Activated CD4-positive, alpha-beta memory T cell treated with anti-CD3 and anti-CD28 coated beads, Interleukin-2, amount 10 ng/mL, durations not matched to agents 7 days and 5 days (primary cell): ENCODE measurements at regions of chr16 and their contacts with region 1.

Region 1: DNA sequence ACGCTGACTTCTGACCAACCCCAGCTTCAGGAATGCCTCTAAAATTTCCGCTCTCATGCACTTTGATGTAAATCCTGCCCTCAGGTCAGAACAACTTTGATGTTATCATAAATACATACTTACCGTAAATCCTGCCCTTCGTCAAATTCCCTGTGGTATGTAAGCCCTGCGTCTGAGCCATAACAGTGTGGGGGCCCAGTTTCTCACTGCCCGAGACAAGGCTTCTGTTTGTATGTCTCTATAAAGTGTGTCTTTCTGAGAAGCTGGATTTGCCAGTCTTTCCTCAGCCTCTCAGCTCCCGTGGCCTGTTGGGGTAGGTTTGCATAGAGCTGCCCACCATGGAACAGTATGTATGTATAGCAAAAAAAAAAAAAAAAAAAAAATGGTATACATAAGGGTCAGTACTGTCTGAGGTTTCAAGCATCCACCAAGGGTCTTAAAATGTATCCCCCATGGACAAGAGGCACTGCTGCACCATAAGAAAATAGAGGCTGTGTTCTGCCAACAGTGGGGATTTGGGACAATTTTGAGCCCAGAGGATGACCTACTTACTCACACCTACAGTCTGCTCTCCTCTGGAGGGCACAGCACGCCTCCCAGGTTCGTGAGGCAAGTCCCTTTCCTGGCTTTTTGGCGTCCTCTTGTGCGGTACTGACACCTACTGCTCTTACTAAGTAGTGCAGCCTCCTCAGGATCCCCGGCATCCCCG is 17.5 kb downstream of the PRMT7 start:
- DNase-seq: peak; percentile 82
- H3K4me3 Mint-ChIP-seq: no peak overlapping the region
- H3K27ac Mint-ChIP-seq: no peak overlapping the region
- H3K4me1 Mint-ChIP-seq: peaks cover 19% of the 10 kb centered on the region
- H3K27me3 Mint-ChIP-seq: no peaks in the 10 kb centered on the region

Region 2: DNA sequence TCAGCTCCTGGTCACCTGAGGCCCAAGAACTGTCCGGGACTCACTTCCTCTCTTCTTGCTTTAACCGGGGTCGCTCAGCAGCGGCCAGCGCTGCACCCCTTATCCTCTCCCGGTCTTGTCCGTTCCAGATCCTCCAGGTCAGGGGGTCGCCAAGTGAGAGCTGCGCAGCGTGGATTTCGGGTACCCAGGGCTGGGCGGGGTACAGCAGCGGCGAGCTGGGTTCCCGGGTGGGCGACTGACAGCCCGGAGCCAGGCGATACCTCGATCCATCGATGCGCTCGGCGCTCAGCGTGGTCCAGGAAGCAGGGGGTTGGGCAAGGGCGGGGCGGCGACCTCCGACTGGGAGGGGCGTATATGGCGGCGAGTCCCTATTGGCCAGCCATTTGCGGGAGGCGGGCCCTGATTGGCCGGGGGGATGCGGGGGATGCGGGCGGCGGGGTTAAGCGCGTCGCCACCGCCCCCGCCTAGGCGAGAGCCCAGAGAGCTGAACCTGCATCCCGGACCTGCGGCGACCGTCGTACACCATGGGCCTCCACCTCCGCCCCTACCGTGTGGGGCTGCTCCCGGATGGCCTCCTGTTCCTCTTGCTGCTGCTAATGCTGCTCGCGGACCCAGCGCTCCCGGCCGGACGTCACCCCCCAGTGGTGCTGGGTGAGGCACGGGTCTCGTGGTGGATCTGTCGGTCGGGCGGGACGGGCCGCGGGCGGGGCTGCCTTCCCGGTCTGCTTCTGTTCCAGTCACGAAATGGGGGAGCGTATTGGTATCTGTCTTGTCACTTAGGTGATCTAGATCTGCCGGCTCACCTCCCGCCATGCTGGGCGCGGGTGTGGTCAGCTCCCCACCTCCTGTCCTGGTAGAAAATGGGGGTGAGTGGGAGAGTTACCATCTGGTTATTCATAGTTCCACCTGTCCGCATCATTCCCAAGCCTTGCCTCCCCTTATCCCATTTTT is 83.1 kb before region 1 on chr16 and contains the start of gene PLA2G15:
- CTCF ChIA-PET with region 1: interaction called, 17 read pairs
- POLR2A ChIA-PET with region 1: no interaction called
- DNase-seq: peak; percentile 96
- H3K4me3 Mint-ChIP-seq: peak within 1 kb of the TSS; percentile 96
- H3K27ac Mint-ChIP-seq: peak within 1 kb of the TSS; percentile 79
- H3K4me1 Mint-ChIP-seq: peaks cover 23% of the 10 kb centered on the region
- H3K27me3 Mint-ChIP-seq: peaks cover 1% of the 10 kb centered on the region
- total RNA-seq, gene PLA2G15: 7.4 to 7.5 TPM

Region 3: GRCh38 chr16:68257906-68258800 is 70.2 kb before region 1 on chr16:
- CTCF ChIA-PET with region 1: interaction called, 285 read pairs
- POLR2A ChIA-PET with region 1: interaction called, 8 read pairs
- DNase-seq: no peak
- H3K4me3 Mint-ChIP-seq: no peak overlapping the region
- H3K27ac Mint-ChIP-seq: no peak overlapping the region
- H3K4me1 Mint-ChIP-seq: peaks cover 8% of the 10 kb centered on the region
- H3K27me3 Mint-ChIP-seq: no peaks in the 10 kb centered on the region

Region 4: DNA sequence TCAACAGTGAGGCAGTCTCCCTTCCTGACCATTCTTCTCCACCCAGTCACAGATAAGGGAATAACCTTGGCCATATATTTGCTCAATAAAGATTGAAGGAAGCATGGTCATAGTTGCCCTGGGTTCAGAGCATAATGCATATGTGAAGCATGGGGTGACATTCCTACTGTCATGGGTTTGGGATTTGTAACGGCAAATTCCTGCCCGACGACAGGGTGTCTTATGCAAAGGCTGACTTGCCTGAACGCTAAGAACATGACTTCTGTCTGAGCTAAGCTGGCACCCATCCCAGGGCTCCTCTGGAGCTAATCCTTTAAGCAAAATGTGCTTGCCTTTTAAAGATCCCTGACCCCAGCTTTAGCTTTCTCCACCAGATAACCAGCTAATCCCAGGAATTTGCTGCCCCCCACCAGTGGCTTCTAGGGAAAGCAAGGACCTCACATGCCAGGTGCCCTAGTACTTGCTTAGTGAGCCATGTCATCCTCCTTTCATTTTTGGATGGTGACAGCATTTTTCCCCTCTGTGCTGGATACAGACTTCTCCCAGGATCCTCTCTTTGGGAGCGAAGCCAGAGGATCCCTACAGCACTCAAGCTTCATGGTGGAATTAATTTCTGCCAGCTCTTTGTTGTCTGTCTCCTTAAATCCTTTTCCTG is 29.3 kb before region 1 on chr16:
- CTCF ChIA-PET with region 1: interaction called, 10 read pairs
- POLR2A ChIA-PET with region 1: no interaction called
- DNase-seq: no peak
- H3K4me3 Mint-ChIP-seq: no peak overlapping the region
- H3K27ac Mint-ChIP-seq: peak overlapping the region; percentile 12
- H3K4me1 Mint-ChIP-seq: peaks cover 10% of the 10 kb centered on the region
- H3K27me3 Mint-ChIP-seq: no peaks in the 10 kb centered on the region

Region 5: DNA sequence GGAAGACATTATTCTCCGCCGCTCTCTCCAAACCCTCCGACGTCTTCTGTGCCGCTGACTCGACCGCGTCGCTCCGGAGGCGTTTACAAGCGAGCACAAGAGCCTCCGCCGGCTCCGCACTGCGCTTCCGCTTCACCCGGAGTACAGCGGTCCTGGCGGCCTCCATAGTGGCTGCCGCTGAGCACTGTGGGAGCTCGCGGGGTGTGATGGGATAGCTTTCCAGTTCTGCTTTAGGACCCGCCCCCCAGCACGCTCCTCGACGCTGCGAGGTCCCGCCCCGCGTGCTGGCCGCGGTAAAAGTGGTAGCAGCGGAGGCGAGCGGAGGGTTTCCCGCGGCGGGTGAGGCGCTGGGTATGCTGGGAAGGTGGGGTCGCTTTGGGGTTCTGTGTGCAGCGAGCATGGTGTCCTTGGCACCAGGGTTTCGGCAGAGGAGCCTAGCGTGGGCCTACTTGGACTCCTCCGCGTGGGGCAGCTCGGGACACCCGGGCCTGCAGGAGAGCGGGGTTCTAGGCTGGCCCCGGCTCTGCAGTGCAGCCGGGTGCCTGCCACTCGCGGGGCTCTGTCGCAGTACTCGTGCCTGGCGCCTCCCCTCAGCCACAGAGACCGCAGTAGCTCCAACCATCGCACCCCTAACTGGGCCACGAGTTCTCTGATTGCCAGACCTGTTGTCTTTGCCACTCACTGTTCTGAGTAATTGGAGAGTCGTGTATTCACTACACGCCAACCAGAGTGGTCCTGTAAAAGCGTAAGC is 17.4 kb before region 1 on chr16 and contains the starts of genes PRMT7 and SLC7A6OS:
- CTCF ChIA-PET with region 1: interaction called, 16 read pairs
- POLR2A ChIA-PET with region 1: interaction called, 5 read pairs
- DNase-seq: peak; percentile 95
- H3K4me3 Mint-ChIP-seq: peak within 1 kb of the TSS; percentile 84
- H3K27ac Mint-ChIP-seq: peak within 1 kb of the TSS; percentile 96
- H3K4me1 Mint-ChIP-seq: peaks cover 55% of the 10 kb centered on the region
- H3K27me3 Mint-ChIP-seq: no peaks in the 10 kb centered on the region
- total RNA-seq, gene PRMT7: 50.4 to 52.2 TPM
- total RNA-seq, gene SLC7A6OS: 30.4 to 31.2 TPM